Sigmoid colon (tissue), 7 donors: ENCODE measurements at regions of chr4 and their contacts with region 1.

Region 1: DNA sequence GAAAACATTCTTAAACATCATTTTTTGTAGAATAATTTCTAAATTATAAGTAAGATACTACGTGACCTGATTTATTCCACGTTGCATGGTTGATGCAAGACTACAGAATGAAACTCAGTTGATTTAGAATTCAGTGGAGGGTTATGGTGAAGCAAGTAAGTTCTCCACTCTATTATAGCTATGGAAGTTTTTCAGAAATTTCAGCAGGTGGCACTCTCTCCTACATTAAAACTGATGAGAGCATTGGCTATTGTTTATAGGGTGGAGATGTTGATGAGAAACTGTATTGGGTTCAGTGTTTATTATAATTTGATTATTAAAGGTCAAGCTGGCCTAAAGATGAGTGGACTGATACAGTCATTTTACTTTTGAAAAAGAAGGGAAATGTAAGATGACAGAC is 88.0 kb downstream of the FNIP2 start:
- DNase-seq: no peak
- H3K4me3 ChIP-seq: no peak overlapping the region
- H3K27ac ChIP-seq: no peak overlapping the region
- H3K4me1 ChIP-seq: peaks cover 0 to 9% (median 6%) of the 10 kb centered on the region in 4 donors
- H3K27me3 ChIP-seq: no peaks in the 10 kb centered on the region
- CTCF ChIP-seq: peak in 3 of 4 experiments; percentile 49 to 54 (median 54)
- EP300 ChIP-seq: no peak
- POLR2A ChIP-seq: no peak

Region 2: GRCh38 chr4:156884178-156884577 is 1972.7 kb before region 1 on chr4:
- intact Hi-C with region 1: no loop called
- DNase-seq: no peak
- H3K4me3 ChIP-seq: no peak overlapping the region
- H3K27ac ChIP-seq: no peak overlapping the region
- H3K4me1 ChIP-seq: peaks cover 0 to 4% (median 0%) of the 10 kb centered on the region in 4 donors
- H3K27me3 ChIP-seq: no peaks in the 10 kb centered on the region
- CTCF ChIP-seq: no peak
- EP300 ChIP-seq: no peak
- POLR2A ChIP-seq: no peak

Region 3: DNA sequence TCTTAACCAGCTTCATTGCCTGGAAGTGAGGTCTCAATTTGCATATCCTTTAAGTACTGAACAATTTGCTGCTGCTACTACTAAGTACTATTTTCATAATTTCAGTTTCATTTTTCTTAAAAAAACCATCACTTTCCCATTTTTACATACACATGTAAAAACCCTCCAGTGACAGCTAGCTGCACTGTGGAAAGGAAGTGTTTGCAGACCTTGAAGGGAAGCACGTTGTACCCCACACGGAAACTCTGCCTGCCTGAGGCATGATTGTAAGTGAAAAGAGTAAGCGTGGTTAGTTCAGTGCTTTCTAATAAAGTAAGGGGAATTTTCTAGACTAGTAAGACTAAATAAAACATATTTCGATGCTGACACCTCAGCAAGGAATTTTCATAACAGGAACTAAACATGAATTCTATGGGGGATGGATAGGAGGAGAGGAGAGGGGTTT is 349.6 kb after region 1 on chr4:
- intact Hi-C with region 1: loop called (anchors 2 kb)
- DNase-seq: no peak
- H3K4me3 ChIP-seq: no peak overlapping the region
- H3K27ac ChIP-seq: no peak overlapping the region
- H3K4me1 ChIP-seq: peaks cover 0 to 26% (median 19%) of the 10 kb centered on the region in 4 donors
- H3K27me3 ChIP-seq: no peaks in the 10 kb centered on the region
- CTCF ChIP-seq: no peak
- EP300 ChIP-seq: no peak
- POLR2A ChIP-seq: no peak